ENCODE measurements at regions of chr12 and their contacts with region 1.

Region 1: GRCh38 chr12:123365025-123365917 is 624 bp upstream of the SBNO1 start:
- DNase-seq: peak; percentile 99
- H3K4me3 Mint-ChIP-seq: peak overlapping the region; percentile 88
- H3K27ac Mint-ChIP-seq: peak overlapping the region; percentile 99
- H3K4me1 Mint-ChIP-seq: peaks cover 11% of the 10 kb centered on the region
- H3K27me3 Mint-ChIP-seq: no peaks in the 10 kb centered on the region

Region 2: DNA sequence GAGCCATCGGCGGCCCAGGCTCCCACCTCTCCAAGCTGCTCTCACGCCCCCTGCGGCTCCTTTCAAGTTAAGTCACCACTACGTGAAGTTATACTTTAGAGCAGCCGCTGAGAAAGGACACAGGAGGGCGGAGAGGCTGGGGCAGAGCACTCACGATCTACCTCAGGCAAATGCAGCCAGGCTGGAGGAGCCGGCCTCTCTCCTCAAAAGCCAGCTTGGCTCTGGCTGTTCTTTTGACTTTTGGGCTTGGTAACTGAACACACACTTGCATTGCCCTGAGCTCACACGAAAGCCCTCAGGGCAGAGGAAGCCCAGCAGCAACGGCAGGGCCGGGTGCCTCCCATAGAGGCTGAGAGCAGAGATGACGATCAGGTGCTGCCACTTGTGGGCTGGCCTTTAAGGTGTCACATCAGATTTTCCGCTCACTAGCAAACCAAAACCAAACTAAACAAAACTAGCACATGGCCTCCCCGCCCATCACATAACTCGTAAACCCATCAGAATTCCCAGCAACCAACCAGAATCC is 289.6 kb before region 1 on chr12:
- CTCF ChIA-PET with region 1: no interaction called
- POLR2A ChIA-PET with region 1: no interaction called
- intact Hi-C with region 1: loop called (anchors 1 kb)
- DNase-seq: peak; percentile 88
- H3K4me3 Mint-ChIP-seq: peak overlapping the region; percentile 68
- H3K27ac Mint-ChIP-seq: peak overlapping the region; percentile 95
- H3K4me1 Mint-ChIP-seq: peaks cover 41% of the 10 kb centered on the region
- H3K27me3 Mint-ChIP-seq: no peaks in the 10 kb centered on the region

Region 3: DNA sequence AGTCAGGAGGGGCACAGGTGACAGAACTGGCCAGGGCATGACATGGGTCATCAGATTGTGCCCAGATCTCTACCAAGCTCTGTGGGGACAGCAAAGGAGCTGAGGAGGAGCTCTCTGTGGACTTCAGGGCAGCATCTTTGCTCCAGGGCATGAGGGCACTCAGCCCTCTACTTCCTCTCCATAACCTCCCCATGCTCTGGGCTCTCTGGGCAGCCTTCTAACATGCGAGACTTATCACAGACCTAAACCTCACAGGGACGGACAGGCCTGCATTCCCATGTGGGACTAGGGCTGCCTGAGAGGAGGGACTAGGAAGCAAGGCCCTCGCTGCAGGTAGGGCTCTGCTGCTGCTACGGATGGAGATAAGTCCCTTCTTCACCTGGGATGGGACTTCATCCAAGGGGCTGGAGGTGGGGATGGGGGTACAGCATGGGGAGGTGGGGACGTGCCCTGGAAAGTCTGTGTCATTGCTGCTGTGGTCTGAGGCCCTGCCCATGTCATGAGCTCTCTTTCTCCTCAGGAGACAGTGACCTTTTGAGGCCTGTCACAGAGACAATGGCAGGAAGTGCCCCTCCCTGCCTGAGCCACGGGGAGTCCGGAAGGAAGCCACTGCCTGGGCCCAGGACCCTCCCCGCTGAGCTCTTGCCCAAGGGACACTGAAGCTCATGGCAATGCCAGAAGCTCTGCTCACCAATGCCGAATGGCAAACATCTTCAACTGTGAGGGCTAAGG is 258.5 kb before region 1 on chr12:
- CTCF ChIA-PET with region 1: no interaction called
- POLR2A ChIA-PET with region 1: no interaction called
- intact Hi-C with region 1: no loop called
- DNase-seq: peak; percentile 81
- H3K4me3 Mint-ChIP-seq: peak overlapping the region; percentile 27
- H3K27ac Mint-ChIP-seq: peak overlapping the region; percentile 89
- H3K4me1 Mint-ChIP-seq: peaks cover 35% of the 10 kb centered on the region
- H3K27me3 Mint-ChIP-seq: no peaks in the 10 kb centered on the region

Region 4: GRCh38 chr12:123260081-123260480 is 105.2 kb before region 1 on chr12:
- CTCF ChIA-PET with region 1: no interaction called
- POLR2A ChIA-PET with region 1: no interaction called
- intact Hi-C with region 1: no loop called
- DNase-seq: no peak
- H3K4me3 Mint-ChIP-seq: no peak overlapping the region
- H3K27ac Mint-ChIP-seq: no peak overlapping the region
- H3K4me1 Mint-ChIP-seq: peaks cover 9% of the 10 kb centered on the region
- H3K27me3 Mint-ChIP-seq: no peaks in the 10 kb centered on the region

Region 5: DNA sequence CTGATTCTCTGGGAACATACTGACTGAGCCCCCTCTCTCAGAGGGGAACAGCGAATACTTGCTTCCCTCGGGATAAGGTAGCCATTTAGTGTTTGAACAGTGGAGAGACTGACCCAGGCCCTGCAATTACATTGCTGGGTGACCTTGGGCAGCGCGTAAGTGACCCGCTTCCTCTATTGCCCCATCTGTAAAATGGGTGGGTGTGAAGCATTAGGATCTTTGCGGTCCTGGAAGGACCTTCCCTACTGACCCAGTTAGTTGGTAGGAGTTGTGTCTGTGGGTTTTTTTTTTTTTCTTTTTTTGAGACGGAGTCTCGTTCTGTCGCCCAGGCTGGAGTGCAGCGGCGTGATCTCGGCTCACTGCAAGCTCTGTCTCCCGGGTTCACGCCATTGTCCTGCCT is 17.4 kb after region 1 on chr12:
- CTCF ChIA-PET with region 1: interaction called, 28 read pairs
- POLR2A ChIA-PET with region 1: interaction called, 28 read pairs
- intact Hi-C with region 1: loop called (anchors 1 kb)
- DNase-seq: no peak
- H3K4me3 Mint-ChIP-seq: peak overlapping the region; percentile 63
- H3K27ac Mint-ChIP-seq: no peak overlapping the region
- H3K4me1 Mint-ChIP-seq: peaks cover 13% of the 10 kb centered on the region
- H3K27me3 Mint-ChIP-seq: no peaks in the 10 kb centered on the region

Region 6: GRCh38 chr12:123427036-123427769 is 61.9 kb after region 1 on chr12:
- CTCF ChIA-PET with region 1: interaction called, 3 read pairs
- POLR2A ChIA-PET with region 1: interaction called, 10 read pairs
- intact Hi-C with region 1: loop called (anchors 1 kb)
- DNase-seq: peak; percentile 64
- H3K4me3 Mint-ChIP-seq: peak overlapping the region; percentile 54
- H3K27ac Mint-ChIP-seq: peak overlapping the region; percentile 92
- H3K4me1 Mint-ChIP-seq: peaks cover 31% of the 10 kb centered on the region
- H3K27me3 Mint-ChIP-seq: no peaks in the 10 kb centered on the region

Region 7: GRCh38 chr12:123519141-123520001 is 154.1 kb after region 1 on chr12:
- CTCF ChIA-PET with region 1: no interaction called
- POLR2A ChIA-PET with region 1: no interaction called
- intact Hi-C with region 1: no loop called
- DNase-seq: peak; percentile 20
- H3K4me3 Mint-ChIP-seq: no peak overlapping the region
- H3K27ac Mint-ChIP-seq: no peak overlapping the region
- H3K4me1 Mint-ChIP-seq: peaks cover 2% of the 10 kb centered on the region
- H3K27me3 Mint-ChIP-seq: no peaks in the 10 kb centered on the region

Region 8: GRCh38 chr12:123580772-123581171 is 215.5 kb after region 1 on chr12:
- CTCF ChIA-PET with region 1: interaction called, 12 read pairs
- POLR2A ChIA-PET with region 1: interaction called, 3 read pairs
- intact Hi-C with region 1: loop called (anchors 1 kb)
- DNase-seq: no peak
- H3K4me3 Mint-ChIP-seq: no peak overlapping the region
- H3K27ac Mint-ChIP-seq: no peak overlapping the region
- H3K4me1 Mint-ChIP-seq: peaks cover 20% of the 10 kb centered on the region
- H3K27me3 Mint-ChIP-seq: no peaks in the 10 kb centered on the region

Measured in activated CD4-positive, alpha-beta memory T cell treated with anti-CD3 and anti-CD28 coated beads for 36 hours (primary cell).